A549 (cell line): ENCODE measurements at regions of chr14 and their contacts with region 1.

Region 1: GRCh38 chr14:21987937-21988336 is 314.3 kb upstream of the OR4E1 start:
- DNase-seq: peak; percentile 36 to 70
- ATAC-seq: peak; percentile 77 to 85; a peak in 5 of 6 replicates
- H3K4me3 ChIP-seq: no peak overlapping the region
- H3K27ac ChIP-seq: no peak overlapping the region
- H3K4me1 ChIP-seq: peaks cover 6% of the 10 kb centered on the region; the same call in 2 of the 3 replicates
- CTCF ChIP-seq: peak; percentile 43
- EP300 ChIP-seq: no peak
- POLR2A ChIP-seq: no peak
- RAD21 ChIP-seq: peak; percentile 20 to 45; a peak in 2 of 5 replicates

Region 2: GRCh38 chr14:21680072-21680471 is 307.9 kb before region 1 on chr14:
- CTCF ChIA-PET with region 1: no interaction called
- POLR2A ChIA-PET with region 1: no interaction called
- DNase-seq: no peak
- ATAC-seq: no peak
- H3K4me3 ChIP-seq: no peak overlapping the region
- H3K27ac ChIP-seq: no peak overlapping the region
- H3K4me1 ChIP-seq: no peaks in the 10 kb centered on the region
- CTCF ChIP-seq: no peak
- EP300 ChIP-seq: no peak
- POLR2A ChIP-seq: no peak
- RAD21 ChIP-seq: no peak

Region 3: GRCh38 chr14:22026527-22026926 is 38.6 kb after region 1 on chr14:
- CTCF ChIA-PET with region 1: no interaction called
- POLR2A ChIA-PET with region 1: no interaction called
- DNase-seq: no peak
- ATAC-seq: no peak
- H3K4me3 ChIP-seq: no peak overlapping the region
- H3K27ac ChIP-seq: no peak overlapping the region
- H3K4me1 ChIP-seq: no peaks in the 10 kb centered on the region
- CTCF ChIP-seq: no peak
- EP300 ChIP-seq: no peak
- POLR2A ChIP-seq: no peak
- RAD21 ChIP-seq: no peak

Region 4: DNA sequence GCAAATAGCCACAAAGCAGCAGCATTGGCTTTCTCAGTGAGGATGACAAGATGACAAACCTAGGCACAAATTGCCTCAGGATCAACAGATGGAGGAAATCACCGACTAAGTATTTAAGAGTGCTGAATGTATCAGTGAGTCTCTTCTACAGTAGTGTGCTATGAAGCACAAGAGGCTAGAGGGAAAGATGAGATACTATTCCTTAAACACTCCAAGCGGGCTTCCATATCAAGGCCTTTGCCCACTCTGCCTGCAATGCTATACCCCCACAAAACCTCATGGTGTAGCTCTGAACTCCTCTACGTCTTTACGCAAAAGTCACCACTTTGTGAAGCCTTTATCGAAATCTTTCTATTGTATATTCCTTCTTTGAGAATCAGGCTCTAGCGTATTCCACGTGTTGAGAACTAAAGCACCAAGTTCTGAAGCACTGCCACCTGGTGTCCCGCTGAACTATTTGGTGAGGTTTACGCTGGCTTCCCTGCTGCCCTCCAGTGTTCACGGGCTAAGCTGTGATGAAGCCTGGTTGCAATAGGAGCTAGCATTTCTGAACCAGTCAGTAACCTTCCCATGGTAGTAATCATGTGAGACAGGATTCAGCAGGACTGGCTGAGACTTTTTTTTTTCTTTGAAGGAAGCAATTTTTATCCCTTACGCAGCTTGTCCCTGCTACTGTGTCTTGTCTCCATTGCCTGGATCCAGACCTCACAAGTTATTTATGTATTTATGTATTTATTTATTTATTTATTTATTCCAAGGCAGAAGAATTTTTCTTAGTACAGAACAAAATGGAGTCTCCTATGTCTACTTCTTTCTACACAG is 112.2 kb after region 1 on chr14:
- CTCF ChIA-PET with region 1: interaction called, 14 read pairs
- POLR2A ChIA-PET with region 1: no interaction called
- DNase-seq: peak; percentile 5 to 81
- ATAC-seq: peak; percentile 99 to 100
- H3K4me3 ChIP-seq: no peak overlapping the region
- H3K27ac ChIP-seq: no peak overlapping the region
- H3K4me1 ChIP-seq: no peaks in the 10 kb centered on the region
- CTCF ChIP-seq: peak; percentile 55
- EP300 ChIP-seq: no peak
- POLR2A ChIP-seq: no peak
- RAD21 ChIP-seq: peak; percentile 41 to 57; a peak in 4 of 5 replicates